Right ventricle myocardium inferior (tissue), 1 donor: ENCODE measurements at regions of chr12 and their contacts with region 1.

Region 1: DNA sequence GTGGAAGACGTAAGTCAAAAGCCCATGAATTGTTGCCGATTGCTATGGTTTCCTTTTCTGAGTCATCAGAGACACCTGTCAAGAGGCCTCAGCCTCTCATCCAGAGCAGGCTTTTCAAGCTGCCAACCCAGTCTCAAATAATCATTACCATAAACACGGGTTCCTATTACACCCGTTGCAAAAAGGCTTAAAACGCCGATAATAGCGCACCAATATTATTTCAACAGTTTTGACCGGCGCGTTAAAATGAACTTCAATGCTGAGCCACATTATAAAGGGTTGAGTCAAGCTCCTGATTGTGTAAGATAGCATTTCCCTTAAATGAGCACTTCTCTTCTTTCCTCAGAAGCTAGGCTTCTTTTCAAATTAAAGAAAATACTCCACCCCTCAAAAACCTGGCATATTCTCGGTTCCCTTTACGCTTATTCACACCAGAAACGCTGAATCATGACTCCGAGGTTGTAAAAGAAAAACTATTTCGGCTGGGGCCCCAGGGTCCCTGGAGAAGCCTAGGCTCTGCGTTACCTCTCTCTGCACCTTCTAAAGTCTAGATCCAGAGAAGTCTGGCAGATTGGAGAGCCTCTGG is 1.4 kb downstream of the TMTC1 start:
- DNase-seq: no peak
- ATAC-seq: peak; percentile 37

Region 2: DNA sequence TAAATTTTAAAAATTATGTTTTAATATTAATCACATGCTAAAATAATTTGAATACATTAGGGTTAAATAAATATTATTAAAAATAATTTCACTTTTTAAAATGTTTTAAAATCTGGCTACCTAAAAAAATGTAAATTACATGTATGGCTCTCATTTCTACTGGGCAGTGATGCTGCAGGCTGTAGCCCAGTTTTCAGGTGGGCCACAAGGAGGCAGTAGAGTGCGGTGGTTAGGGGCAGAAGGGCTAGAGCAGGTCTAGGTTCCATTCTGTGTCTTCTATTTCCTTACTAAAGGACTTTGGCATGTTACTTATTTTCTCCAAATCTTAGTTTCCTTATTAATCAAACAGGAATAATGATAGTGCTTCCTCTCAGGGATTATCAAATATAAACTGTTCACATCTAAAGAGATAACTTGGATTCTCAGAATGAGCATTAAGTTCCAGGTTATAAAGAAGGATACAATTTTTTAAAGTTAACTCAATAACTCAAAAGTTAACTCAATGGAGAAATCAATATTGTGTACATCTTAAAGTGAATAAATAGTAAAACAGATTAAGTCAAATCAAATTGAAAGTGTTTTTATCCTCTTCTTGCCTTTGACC is 230.0 kb before region 1 on chr12:
- intact Hi-C with region 1: loop called (anchors 5 kb)
- DNase-seq: peak; percentile 71
- ATAC-seq: peak; percentile 87

Region 3: GRCh38 chr12:29662734-29663323 is 119.5 kb before region 1 on chr12:
- intact Hi-C with region 1: loop called (anchors 5 kb)
- DNase-seq: no peak
- ATAC-seq: peak; percentile 50

Region 4: DNA sequence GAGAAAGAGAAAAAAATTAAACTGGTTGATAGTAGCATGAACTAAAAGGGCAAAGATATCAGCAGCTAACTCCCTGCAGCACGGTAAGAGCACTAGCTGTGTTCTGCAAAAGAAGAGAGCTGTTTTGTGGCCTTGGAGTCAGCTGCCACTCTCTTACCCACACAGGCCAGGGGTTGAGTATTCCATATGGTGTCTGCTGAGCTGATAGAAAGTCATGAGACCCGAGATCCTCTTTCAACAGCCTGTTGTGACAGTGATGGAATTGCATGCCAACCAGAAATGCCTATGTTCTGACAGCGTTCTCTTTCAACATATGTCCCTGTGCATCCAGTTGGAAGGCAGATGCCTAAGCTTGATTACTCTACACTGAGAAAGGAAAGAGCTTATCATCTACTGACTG is 38.6 kb before region 1 on chr12:
- intact Hi-C with region 1: loop called (anchors 5 kb)
- DNase-seq: no peak
- ATAC-seq: peak; percentile 42

Region 5: DNA sequence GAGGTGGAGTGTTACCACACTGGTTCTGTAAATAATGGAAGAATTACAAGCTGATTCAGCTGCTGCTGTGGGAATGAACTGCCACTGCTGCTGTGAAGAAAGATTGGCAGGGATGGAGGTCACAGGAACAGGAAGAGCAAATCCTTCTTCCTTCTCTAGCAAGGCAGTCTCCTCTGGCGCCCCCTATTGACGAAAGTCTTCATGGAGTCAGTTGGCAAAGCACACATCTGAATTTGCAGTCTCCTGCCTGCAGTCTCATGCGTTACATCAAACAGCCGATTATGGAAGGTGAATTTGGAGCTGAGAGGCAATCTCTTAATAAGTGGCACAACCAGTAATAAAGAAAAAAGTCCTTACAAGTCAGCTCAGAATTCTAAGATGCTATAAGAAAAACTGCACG is 107.4 kb after region 1 on chr12:
- intact Hi-C with region 1: loop called (anchors 10 kb)
- DNase-seq: no peak
- ATAC-seq: no peak